ENCODE measurements at regions of chr6 and their contacts with region 1.

Region 1: GRCh38 chr6:89940225-89941027 is 46.2 kb downstream of the GJA10 start:
- DNase-seq: peak; percentile 73
- H3K4me3 ChIP-seq: no peak overlapping the region
- H3K27ac ChIP-seq: no peak overlapping the region
- H3K4me1 ChIP-seq: no peaks in the 10 kb centered on the region
- H3K27me3 ChIP-seq: peaks cover 0 to 10% of the 10 kb centered on the region in 2 experiments
- CTCF ChIP-seq: peak; percentile 67
- POLR2A ChIP-seq: no peak

Region 2: DNA sequence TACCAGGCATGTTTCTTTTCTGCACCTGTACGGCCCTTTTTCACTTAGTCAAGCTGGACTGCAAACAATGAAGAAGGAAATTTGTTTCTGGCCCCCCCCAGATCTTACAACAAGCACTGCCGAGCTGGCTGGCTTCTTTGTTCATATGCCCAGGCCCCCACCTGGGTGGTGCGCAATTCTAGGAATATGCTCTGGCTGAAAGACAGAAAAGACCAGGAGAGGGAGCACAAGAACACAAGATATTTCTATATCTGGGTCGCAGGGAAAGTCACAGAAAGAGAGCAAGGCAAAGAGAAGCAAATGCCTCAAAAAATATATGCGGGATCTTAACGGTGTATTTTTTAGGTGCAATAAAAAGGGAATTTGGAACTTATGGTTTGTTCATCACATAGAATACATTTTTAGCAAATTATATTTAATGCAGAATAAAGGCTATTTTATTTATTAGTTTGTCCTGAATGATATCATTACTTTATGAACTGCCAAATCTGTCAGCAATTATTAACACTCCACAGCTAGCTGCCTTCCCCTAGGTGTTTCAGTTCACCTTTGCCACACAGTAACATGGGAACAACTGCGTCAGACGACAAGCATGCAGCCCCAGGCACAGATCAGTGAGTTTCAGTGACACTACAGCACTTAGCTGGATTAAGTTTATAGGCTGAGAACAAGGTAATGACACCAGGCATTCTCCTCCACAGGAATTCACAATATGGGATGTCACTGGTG is 30.3 kb after region 1 on chr6:
- CTCF ChIA-PET with region 1: interaction called, 17 read pairs
- POLR2A ChIA-PET with region 1: no interaction called
- dilution Hi-C with region 1: no loop called
- intact Hi-C with region 1: loop called (anchors 1 kb)
- DNase-seq: peak; percentile 58
- H3K4me3 ChIP-seq: no peak overlapping the region
- H3K27ac ChIP-seq: no peak overlapping the region
- H3K4me1 ChIP-seq: no peaks in the 10 kb centered on the region
- H3K27me3 ChIP-seq: peaks cover 0 to 11% of the 10 kb centered on the region in 2 experiments
- CTCF ChIP-seq: peak; percentile 48 to 51
- POLR2A ChIP-seq: no peak

Region 3: DNA sequence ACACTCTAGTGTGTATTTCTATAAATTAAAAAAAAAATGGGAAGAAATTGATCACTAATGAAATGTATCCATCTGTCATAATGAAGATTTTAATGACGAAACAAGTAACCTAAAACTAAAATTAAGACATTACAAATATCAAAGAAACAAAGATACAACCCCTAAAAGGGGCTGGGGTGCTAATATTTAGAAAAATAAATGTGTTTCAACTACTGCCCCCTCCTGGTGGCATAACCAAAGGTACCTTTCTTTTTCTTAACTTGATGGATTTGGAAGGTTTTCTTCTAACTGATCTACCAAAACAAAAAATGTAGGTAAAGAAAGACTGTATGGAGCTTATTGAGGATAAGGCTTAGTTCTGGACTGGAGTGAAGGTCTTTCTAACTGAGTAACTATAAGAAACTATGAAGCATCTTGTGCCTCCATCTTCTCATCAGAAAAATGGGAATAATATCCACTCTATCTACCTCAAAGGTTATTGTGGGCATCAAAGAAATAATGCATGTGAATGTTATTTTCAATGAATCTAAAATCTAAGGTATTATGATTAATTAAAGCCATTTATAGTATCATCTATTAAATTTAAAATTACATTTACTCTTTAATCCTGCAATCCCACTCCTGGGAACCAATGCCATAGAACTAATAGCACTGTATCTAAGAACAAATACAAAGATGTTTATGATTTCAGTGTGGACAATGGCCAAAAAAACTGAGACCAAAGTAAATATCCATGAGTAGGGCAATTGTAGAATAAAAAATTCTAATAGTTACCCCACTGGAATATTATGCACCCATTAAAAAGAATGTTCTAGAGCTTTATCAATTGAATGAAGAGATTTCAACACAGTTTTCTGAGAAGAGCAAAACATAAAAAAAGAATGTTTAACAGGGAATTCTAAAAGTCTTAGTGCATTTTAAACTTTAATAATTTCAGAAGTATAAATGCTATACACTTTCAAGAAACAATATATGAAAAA is 239.1 kb after region 1 on chr6:
- CTCF ChIA-PET with region 1: interaction called, 12 read pairs
- POLR2A ChIA-PET with region 1: no interaction called
- dilution Hi-C with region 1: no loop called
- intact Hi-C with region 1: loop called (anchors 10 kb)
- DNase-seq: no peak
- H3K4me3 ChIP-seq: no peak overlapping the region
- H3K27ac ChIP-seq: no peak overlapping the region
- H3K4me1 ChIP-seq: peaks cover under 1% of the 10 kb centered on the region
- H3K27me3 ChIP-seq: peaks cover 9 to 11% of the 10 kb centered on the region in 2 experiments
- CTCF ChIP-seq: peak; percentile 22 to 23
- POLR2A ChIP-seq: no peak

Region 4: DNA sequence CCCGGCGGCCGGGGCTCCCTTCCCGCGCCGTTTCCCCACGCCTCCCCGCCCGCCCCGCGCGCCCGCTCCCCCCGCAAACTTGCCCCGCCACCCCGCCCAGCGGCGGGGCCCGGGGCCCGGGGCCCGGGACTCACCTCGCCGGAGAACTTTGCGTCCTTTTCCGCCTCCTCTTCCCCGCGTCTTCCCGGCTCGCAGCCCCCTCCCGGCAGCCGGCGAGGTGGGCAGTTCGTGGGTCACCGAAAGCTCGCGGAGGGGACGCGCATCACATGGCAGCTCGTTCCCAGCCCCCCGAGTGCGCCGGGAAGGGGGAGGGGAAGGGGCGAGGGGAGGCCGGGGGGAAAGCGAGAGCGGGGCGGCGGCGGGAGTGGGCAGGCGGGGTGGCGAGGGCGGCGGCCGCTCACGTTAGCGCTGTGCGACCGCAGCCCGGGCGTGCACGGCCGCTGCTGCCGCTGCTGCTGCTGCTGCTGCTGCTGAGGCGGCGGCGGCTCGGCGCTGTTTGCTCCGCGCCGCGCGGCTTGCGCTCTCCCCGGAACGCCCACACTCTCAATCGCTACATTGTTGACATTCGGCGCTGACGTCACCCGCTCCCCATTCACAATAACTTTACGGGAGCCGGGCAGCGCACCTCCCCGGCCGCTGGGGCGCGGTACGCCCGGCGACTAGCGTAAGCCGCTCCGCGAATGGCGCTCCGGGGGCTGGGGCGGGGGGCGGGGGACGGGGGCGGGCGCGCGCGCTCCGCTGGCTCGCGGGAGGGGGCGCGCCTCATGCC is 356.1 kb after region 1 on chr6 and contains the start of gene BACH2:
- CTCF ChIA-PET with region 1: interaction called, 16 read pairs
- POLR2A ChIA-PET with region 1: no interaction called
- dilution Hi-C with region 1: no loop called
- intact Hi-C with region 1: loop called (anchors 2 kb)
- DNase-seq: peak; percentile 78
- H3K4me3 ChIP-seq: peak within 1 kb of the TSS; percentile 34 to 83 (median 57)
- H3K27ac ChIP-seq: no peak within 1 kb of the TSS
- H3K4me1 ChIP-seq: peaks cover 6% of the 10 kb centered on the region
- H3K27me3 ChIP-seq: peaks cover 12 to 38% of the 10 kb centered on the region in 2 experiments
- CTCF ChIP-seq: peak in 1 of 2 donors; percentile 30
- POLR2A ChIP-seq: no peak
- total RNA-seq, gene BACH2: 5.6 and 5.9 TPM in 2 replicates

Region 5: DNA sequence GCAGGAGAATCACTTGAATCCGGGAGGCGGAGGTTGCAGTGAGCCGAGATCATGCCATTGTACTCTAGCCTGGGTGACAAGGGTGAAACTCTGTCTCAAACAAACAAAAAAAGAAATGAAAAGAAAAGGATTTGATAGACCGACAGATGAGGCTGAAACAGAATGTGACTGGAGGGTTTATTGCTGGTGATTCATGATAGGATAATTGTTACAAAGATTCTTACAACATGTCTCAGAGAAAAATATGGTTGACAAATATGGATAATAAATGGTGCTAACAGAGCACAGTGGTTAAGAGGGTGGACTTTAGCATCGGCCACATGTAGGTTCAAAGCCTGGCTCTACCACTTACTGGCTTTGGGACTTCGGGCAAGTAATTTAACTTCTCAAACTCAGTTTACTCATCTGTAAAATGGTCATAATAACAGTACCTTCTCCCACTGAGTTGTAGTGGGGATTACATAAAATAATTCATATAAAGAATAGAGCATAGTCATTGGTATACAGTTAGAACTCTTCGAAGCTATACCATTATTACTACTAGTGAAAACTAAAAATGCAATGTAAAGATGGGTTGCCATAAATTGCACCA is 514.5 kb after region 1 on chr6:
- CTCF ChIA-PET with region 1: interaction called, 17 read pairs
- POLR2A ChIA-PET with region 1: no interaction called
- dilution Hi-C with region 1: no loop called
- intact Hi-C with region 1: no loop called
- DNase-seq: no peak
- H3K4me3 ChIP-seq: no peak overlapping the region
- H3K27ac ChIP-seq: no peak overlapping the region
- H3K4me1 ChIP-seq: no peaks in the 10 kb centered on the region
- H3K27me3 ChIP-seq: no peaks in the 10 kb centered on the region
- CTCF ChIP-seq: no peak
- POLR2A ChIP-seq: no peak

Region 6: DNA sequence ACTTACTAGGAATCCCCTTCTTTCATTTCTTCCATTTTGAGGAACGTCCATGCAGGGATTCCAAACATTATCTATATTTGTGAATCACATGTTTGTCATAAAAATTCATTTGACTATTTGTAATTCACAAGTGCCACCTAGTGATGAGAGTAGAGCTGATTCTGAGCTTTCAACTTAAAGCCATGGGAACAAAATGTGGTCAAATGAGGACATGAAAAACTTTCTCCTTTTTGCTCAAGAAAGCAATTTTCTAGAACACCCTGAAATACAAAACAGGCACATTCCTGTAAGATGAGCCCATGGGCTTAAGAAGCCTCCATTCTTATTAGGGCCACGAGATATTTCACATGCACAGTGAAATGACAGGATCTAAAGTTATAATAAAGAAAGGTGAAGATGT is 634.2 kb after region 1 on chr6:
- CTCF ChIA-PET with region 1: interaction called, 15 read pairs
- POLR2A ChIA-PET with region 1: no interaction called
- dilution Hi-C with region 1: no loop called
- intact Hi-C with region 1: no loop called
- DNase-seq: peak; percentile 9
- H3K4me3 ChIP-seq: no peak overlapping the region
- H3K27ac ChIP-seq: no peak overlapping the region
- H3K4me1 ChIP-seq: no peaks in the 10 kb centered on the region
- H3K27me3 ChIP-seq: no peaks in the 10 kb centered on the region
- CTCF ChIP-seq: no peak
- POLR2A ChIP-seq: no peak

Region 7: DNA sequence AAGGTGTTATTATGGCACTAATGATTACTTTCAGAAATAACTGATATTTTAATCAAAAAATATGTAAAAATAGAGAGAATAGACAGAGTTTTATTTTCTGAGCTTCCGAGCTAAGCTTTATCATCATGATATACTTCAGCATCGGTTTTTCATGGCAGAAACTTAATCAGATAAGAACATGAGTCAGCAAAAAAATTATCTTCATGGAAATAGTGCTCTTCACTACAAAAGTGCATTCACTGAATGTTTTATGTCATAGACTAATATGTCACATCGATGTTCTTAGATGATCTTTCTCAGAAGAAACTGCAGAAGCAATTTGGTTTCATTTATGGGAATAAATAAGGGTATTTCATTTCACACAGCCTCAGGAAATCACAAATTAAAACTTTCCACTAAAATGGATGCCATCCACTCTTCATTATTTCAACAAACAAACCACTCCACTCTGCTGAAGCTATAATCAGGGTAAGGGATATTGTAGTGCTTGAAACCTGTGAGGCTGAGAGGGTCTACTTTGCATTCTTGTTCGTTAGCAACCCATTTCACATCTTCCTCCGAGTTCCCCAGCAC is 656.6 kb after region 1 on chr6:
- CTCF ChIA-PET with region 1: no interaction called
- POLR2A ChIA-PET with region 1: no interaction called
- dilution Hi-C with region 1: no loop called
- intact Hi-C with region 1: no loop called
- DNase-seq: no peak
- H3K4me3 ChIP-seq: no peak overlapping the region
- H3K27ac ChIP-seq: no peak overlapping the region
- H3K4me1 ChIP-seq: no peaks in the 10 kb centered on the region
- H3K27me3 ChIP-seq: peaks cover 5 to 17% of the 10 kb centered on the region in 2 experiments
- CTCF ChIP-seq: no peak
- POLR2A ChIP-seq: no peak

Measured in endothelial cell of umbilical vein (primary cell).